ENCODE measurements at regions of chr14 and their contacts with region 1.

Region 1: DNA sequence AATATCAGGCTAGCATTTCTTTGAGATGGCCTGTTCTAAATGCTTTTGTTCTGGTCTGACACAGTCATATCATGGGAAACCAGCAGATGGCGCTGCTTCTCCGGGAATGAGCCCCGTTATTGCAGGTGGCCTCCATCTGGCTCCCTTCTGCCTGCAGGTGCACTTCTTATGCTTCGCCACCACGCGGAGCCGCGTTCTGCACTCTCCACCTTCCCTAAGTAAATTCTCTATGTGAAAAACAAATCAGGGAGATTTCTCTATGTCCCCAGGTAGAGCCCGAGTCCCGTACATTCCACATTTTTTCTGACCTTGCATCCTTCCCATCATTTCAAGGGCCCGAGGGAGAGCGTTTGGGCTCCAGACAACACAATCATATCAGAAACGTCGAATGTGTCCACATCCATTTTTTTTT is 26.2 kb downstream of the GLRX5 start:
- DNase-seq: peak; percentile 89 to 95
- H3K4me3 ChIP-seq: no peak overlapping the region
- H3K27ac ChIP-seq: no peak overlapping the region
- H3K4me1 ChIP-seq: no peaks in the 10 kb centered on the region
- H3K27me3 ChIP-seq: no peaks in the 10 kb centered on the region
- CTCF ChIP-seq: peak; percentile 91 to 100 (median 98)
- POLR2A ChIP-seq: no peak

Region 2: GRCh38 chr14:95408731-95409476 is 152.1 kb before region 1 on chr14:
- intact Hi-C with region 1: no loop called
- DNase-seq: no peak
- H3K4me3 ChIP-seq: no peak overlapping the region
- H3K27ac ChIP-seq: peak overlapping the region in 1 of 3 donors; percentile 24
- H3K4me1 ChIP-seq: no peaks in the 10 kb centered on the region
- H3K27me3 ChIP-seq: no peaks in the 10 kb centered on the region
- CTCF ChIP-seq: no peak
- POLR2A ChIP-seq: no peak

Region 3: GRCh38 chr14:95759941-95760340 is 198.9 kb after region 1 on chr14:
- intact Hi-C with region 1: loop called (anchors 10 kb)
- DNase-seq: no peak
- H3K4me3 ChIP-seq: no peak overlapping the region
- H3K27ac ChIP-seq: no peak overlapping the region
- H3K4me1 ChIP-seq: no peaks in the 10 kb centered on the region
- H3K27me3 ChIP-seq: no peaks in the 10 kb centered on the region
- CTCF ChIP-seq: no peak
- POLR2A ChIP-seq: no peak

Region 4: DNA sequence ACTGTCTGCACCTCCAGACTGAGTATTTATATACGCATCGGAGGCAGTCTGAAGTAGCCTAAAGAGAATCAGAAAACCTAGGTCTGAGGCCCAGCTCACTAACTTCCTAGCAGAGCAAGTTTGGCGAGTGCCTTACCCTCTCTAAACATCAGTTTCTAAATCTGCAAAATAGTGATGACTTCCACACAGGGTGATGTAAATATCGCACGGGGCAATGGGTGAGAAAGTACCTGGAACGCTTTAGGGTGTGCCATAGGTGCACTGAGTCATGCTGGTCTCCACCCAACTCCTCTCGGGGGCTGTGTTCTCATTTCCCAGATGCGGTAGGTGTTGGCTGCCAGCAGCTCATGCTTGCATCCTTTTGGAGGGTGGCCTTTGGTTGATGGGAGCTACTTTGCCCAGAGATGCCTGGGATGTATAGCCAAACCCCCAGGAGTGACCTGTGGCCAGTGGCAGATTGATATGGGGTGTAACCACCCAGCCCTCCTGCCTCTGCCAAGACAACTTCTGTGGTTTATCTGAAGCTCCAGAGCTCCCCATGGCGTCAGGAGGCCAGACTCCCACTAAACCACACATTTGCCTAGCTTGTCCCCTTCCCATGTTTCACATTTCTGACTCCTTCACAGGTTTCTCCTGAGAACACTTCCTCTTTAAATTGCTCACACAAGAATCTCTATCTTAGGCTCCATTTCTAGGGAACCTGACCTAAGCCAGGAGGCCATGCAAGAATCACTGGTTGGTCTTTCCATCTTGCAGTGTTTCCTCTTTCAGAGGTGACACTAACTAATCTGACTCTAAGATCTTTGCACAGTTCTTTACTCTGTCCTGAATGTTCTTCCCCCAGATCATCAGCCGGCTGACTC is 253.6 kb after region 1 on chr14:
- intact Hi-C with region 1: no loop called
- DNase-seq: no peak
- H3K4me3 ChIP-seq: no peak overlapping the region
- H3K27ac ChIP-seq: no peak overlapping the region
- H3K4me1 ChIP-seq: no peaks in the 10 kb centered on the region
- H3K27me3 ChIP-seq: no peaks in the 10 kb centered on the region
- CTCF ChIP-seq: no peak
- POLR2A ChIP-seq: no peak

Region 5: GRCh38 chr14:95993768-95994592 is 433.0 kb after region 1 on chr14:
- intact Hi-C with region 1: loop called (anchors 5 kb)
- DNase-seq: peak; percentile 20 to 25
- H3K4me3 ChIP-seq: no peak overlapping the region
- H3K27ac ChIP-seq: no peak overlapping the region
- H3K4me1 ChIP-seq: no peaks in the 10 kb centered on the region
- H3K27me3 ChIP-seq: peaks cover 5% of the 10 kb centered on the region
- CTCF ChIP-seq: peak; percentile 56 to 88 (median 80)
- POLR2A ChIP-seq: no peak

Measured in thyroid gland (tissue), 4 donors.